ENCODE measurements at regions of chr2 and their contacts with region 1.

Region 1: DNA sequence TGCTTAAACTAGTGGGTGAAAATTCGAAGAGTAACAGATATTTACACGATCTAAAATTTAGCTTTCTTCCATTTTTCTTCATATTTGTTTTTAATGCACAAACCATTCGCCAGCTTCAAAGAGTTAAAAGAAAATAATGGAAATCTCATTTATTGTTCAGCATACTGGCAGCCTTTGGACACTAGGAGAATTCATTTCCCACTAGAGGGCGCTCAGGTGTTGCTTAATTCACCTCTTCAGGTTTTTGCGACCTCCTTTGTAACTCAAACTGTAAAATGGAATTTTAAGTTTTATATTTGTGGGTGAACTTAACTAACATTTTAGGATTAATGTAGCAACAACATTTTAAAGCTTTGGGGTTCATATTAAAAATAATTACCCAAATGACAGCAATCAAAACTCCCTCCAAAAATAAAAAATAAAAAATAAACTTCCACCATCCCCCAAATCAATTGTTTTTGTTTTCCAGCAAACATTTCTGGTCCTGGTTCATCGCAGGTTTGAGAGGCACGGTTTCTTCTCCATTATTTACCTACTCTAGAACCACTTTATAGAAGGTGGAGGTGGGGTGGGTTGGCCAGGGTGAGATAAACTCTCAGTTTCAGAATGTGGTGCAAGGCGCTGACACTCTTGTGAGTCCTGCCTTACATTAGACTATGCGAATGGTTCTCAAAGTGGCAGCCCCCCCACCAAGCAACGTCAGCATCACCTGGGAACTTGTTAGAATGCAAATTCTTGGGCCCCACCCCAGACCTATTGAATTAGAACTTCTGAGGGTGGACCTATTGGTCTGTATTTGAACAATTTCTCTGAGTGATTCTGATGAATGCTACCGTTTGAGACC is 24.7 kb upstream of the PNPT1 start:
- DNase-seq: no peak
- H3K4me3 ChIP-seq: no peak overlapping the region
- H3K27ac ChIP-seq: no peak overlapping the region
- H3K4me1 ChIP-seq: no peaks in the 10 kb centered on the region
- H3K27me3 ChIP-seq: no peaks in the 10 kb centered on the region
- CTCF ChIP-seq: peak; percentile 37 to 77 (median 67)
- POLR2A ChIP-seq: no peak

Region 2: GRCh38 chr2:55732854-55733253 is 14.5 kb after region 1 on chr2:
- intact Hi-C with region 1: no loop called
- DNase-seq: no peak
- H3K4me3 ChIP-seq: no peak overlapping the region
- H3K27ac ChIP-seq: peak overlapping the region; percentile 13
- H3K4me1 ChIP-seq: no peaks in the 10 kb centered on the region
- H3K27me3 ChIP-seq: no peaks in the 10 kb centered on the region
- CTCF ChIP-seq: no peak
- POLR2A ChIP-seq: no peak

Region 3: GRCh38 chr2:55824628-55825027 is 106.2 kb after region 1 on chr2:
- intact Hi-C with region 1: no loop called
- DNase-seq: no peak
- H3K4me3 ChIP-seq: no peak overlapping the region
- H3K27ac ChIP-seq: no peak overlapping the region
- H3K4me1 ChIP-seq: no peaks in the 10 kb centered on the region
- H3K27me3 ChIP-seq: no peaks in the 10 kb centered on the region
- CTCF ChIP-seq: no peak
- POLR2A ChIP-seq: no peak

Region 4: DNA sequence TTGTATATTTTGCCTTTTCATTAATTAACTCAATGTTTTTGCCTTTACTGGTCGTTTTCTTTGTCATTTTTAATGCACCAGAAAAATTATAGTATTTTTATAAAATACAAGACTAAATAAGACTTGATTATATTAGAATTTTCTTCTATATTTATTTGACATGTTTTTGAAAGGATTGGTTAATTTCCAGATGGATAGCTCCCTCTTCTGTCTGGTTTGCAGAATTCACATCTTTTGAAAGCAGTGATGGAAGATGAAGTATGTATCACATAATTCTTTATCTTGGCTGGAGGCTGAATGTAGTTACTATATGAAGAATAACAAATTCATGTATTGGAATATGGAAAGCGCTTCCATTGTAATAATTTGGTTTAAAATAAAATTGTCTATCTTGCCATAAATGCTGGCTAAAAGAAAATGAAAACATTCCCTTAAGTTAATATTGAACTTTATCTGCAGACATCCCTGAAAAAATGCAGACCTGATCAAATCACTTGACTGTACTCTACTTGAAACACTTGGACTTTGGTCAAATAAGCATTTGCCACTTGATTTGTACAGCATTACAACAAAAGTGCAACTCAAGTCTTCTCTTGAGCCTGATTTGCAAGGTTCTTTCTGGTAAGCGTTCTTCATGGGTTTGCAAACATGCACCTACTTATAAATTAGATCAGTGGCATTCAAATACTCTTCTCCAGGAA is 291.5 kb after region 1 on chr2:
- intact Hi-C with region 1: loop called (anchors 10 kb)
- DNase-seq: no peak
- H3K4me3 ChIP-seq: no peak overlapping the region
- H3K27ac ChIP-seq: no peak overlapping the region
- H3K4me1 ChIP-seq: no peaks in the 10 kb centered on the region
- H3K27me3 ChIP-seq: no peaks in the 10 kb centered on the region
- CTCF ChIP-seq: peak; percentile 22 to 65 (median 23)
- POLR2A ChIP-seq: no peak

Region 5: DNA sequence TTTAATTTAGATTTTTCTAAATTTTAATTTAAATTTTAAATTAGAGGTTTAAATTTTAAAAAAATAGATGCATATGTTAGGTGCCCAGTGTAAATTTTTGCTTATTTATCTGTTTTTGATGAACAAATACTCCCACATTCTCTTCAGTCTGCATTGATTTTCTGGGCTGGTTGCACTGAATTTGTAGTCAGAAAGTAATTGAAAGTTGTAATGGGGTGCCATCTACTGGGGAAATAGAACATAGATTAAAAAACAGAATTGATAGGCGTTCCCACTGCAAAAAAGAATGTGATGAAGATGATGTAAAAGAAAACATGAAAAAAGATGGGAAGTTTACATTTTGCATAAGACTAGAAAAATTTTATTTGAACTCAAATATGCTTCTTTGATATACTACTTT is 413.8 kb after region 1 on chr2:
- intact Hi-C with region 1: loop called (anchors 5 kb)
- DNase-seq: no peak
- H3K4me3 ChIP-seq: no peak overlapping the region
- H3K27ac ChIP-seq: no peak overlapping the region
- H3K4me1 ChIP-seq: peaks cover 6% of the 10 kb centered on the region
- H3K27me3 ChIP-seq: no peaks in the 10 kb centered on the region
- CTCF ChIP-seq: peak in 1 of 3 experiments; percentile 43
- POLR2A ChIP-seq: no peak

Measured in vagina (tissue), 2 donors.